AG04450 (cell line): ENCODE measurements at regions of chr6 and their contacts with region 1.

Region 1: GRCh38 chr6:39865011-39865888 is 69.0 kb downstream of the MOCS1 start:
- DNase-seq: no peak
- H3K4me3 ChIP-seq: no peak overlapping the region
- H3K27ac ChIP-seq: no peak overlapping the region
- H3K27me3 ChIP-seq: no peaks in the 10 kb centered on the region
- CTCF ChIP-seq: peak; percentile 85

Region 2: GRCh38 chr6:39830444-39830843 is 34.8 kb before region 1 on chr6:
- CTCF ChIA-PET with region 1: no interaction called
- POLR2A ChIA-PET with region 1: no interaction called
- DNase-seq: no peak
- H3K4me3 ChIP-seq: no peak overlapping the region
- H3K27ac ChIP-seq: no peak overlapping the region
- H3K27me3 ChIP-seq: peaks cover 3% of the 10 kb centered on the region
- CTCF ChIP-seq: no peak

Region 3: GRCh38 chr6:39847221-39847620 is 18.0 kb before region 1 on chr6:
- CTCF ChIA-PET with region 1: interaction called, 45 read pairs
- POLR2A ChIA-PET with region 1: no interaction called
- DNase-seq: no peak
- H3K4me3 ChIP-seq: no peak overlapping the region
- H3K27ac ChIP-seq: no peak overlapping the region
- H3K27me3 ChIP-seq: no peaks in the 10 kb centered on the region
- CTCF ChIP-seq: no peak

Region 4: GRCh38 chr6:39876826-39877225 is 11.6 kb after region 1 on chr6:
- CTCF ChIA-PET with region 1: interaction called, 61 read pairs
- POLR2A ChIA-PET with region 1: interaction called, 3 read pairs
- DNase-seq: no peak
- H3K4me3 ChIP-seq: no peak overlapping the region
- H3K27ac ChIP-seq: no peak overlapping the region
- H3K27me3 ChIP-seq: no peaks in the 10 kb centered on the region
- CTCF ChIP-seq: no peak

Region 5: GRCh38 chr6:39882531-39882899 is 17.3 kb after region 1 on chr6:
- CTCF ChIA-PET with region 1: interaction called, 180 read pairs
- POLR2A ChIA-PET with region 1: interaction called, 3 read pairs
- DNase-seq: peak; percentile 96
- H3K4me3 ChIP-seq: peak overlapping the region; percentile 45
- H3K27ac ChIP-seq: peak overlapping the region; percentile 95
- H3K27me3 ChIP-seq: no peaks in the 10 kb centered on the region
- CTCF ChIP-seq: no peak

Region 6: GRCh38 chr6:39892490-39893129 is 27.4 kb after region 1 on chr6:
- CTCF ChIA-PET with region 1: interaction called, 180 read pairs
- POLR2A ChIA-PET with region 1: no interaction called
- DNase-seq: peak; percentile 36
- H3K4me3 ChIP-seq: no peak overlapping the region
- H3K27ac ChIP-seq: no peak overlapping the region
- H3K27me3 ChIP-seq: no peaks in the 10 kb centered on the region
- CTCF ChIP-seq: peak; percentile 93

Region 7: GRCh38 chr6:39945626-39946025 is 80.4 kb after region 1 on chr6:
- CTCF ChIA-PET with region 1: no interaction called
- POLR2A ChIA-PET with region 1: no interaction called
- DNase-seq: no peak
- H3K4me3 ChIP-seq: no peak overlapping the region
- H3K27ac ChIP-seq: no peak overlapping the region
- H3K27me3 ChIP-seq: peaks cover 8% of the 10 kb centered on the region
- CTCF ChIP-seq: no peak

Region 8: GRCh38 chr6:39961178-39961577 is 95.9 kb after region 1 on chr6:
- CTCF ChIA-PET with region 1: interaction called, 10 read pairs
- POLR2A ChIA-PET with region 1: no interaction called
- DNase-seq: no peak
- H3K4me3 ChIP-seq: no peak overlapping the region
- H3K27ac ChIP-seq: no peak overlapping the region
- H3K27me3 ChIP-seq: no peaks in the 10 kb centered on the region
- CTCF ChIP-seq: no peak